Gastrocnemius medialis (tissue), 4 donors: ENCODE measurements at regions of chr10 and their contacts with region 1.

Region 1: DNA sequence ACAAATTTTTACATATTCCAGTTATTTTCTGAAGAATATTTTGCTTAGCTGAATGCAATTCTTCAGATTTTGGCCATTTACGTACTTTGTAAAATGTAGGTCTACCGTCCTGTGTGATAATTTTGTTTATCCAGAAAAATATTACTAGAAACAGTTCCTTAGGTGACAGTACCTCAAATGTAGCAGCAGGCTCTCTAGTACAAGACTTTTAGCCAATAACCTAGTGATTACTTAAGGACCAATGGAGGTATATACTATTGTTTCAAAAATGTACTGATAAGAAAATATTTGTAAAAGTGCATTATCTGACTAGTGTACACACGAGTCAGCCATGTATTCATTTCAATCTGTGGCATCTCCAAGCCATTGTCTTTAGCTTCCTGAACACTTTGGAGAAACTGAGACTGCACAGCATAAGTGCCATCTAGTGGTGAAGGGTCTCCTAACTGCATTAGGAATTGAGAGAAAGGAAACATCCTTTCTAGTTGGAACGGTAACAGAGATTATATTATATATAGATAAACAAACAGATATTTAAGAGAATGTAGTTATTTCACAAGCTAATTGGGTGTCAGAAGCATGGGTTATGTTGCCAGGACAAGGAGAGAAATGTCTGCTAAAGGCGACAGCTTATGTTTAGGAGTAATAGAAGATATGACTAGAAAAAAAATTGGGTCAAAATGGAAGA is 23.7 kb downstream of the RTKN2 start:
- DNase-seq: peak; percentile 29 to 41
- ATAC-seq: peak; percentile 82 to 83
- H3K4me3 ChIP-seq: no peak overlapping the region
- H3K27ac ChIP-seq: no peak overlapping the region
- H3K4me1 ChIP-seq: peaks cover 6 to 12% of the 10 kb centered on the region in 2 donors
- H3K27me3 ChIP-seq: no peaks in the 10 kb centered on the region
- CTCF ChIP-seq: peak; percentile 75 to 88 (median 83)
- POLR2A ChIP-seq: no peak

Region 2: GRCh38 chr10:62038609-62039190 is 206.2 kb before region 1 on chr10:
- in situ Hi-C with region 1: loop called in 3 of 4 experiments (anchors 5 kb)
- intact Hi-C with region 1: loop called (anchors 1 kb)
- DNase-seq: peak; percentile 48 to 65
- ATAC-seq: peak; percentile 73 to 85
- H3K4me3 ChIP-seq: peak overlapping the region in 3 of 4 donors; percentile 4 to 43 (median 27)
- H3K27ac ChIP-seq: peak overlapping the region in 2 of 4 donors; percentile 1 to 50
- H3K4me1 ChIP-seq: peaks cover 21 to 39% of the 10 kb centered on the region in 2 donors
- H3K27me3 ChIP-seq: no peaks in the 10 kb centered on the region
- CTCF ChIP-seq: peak; percentile 80 to 92 (median 89)
- POLR2A ChIP-seq: no peak

Region 3: DNA sequence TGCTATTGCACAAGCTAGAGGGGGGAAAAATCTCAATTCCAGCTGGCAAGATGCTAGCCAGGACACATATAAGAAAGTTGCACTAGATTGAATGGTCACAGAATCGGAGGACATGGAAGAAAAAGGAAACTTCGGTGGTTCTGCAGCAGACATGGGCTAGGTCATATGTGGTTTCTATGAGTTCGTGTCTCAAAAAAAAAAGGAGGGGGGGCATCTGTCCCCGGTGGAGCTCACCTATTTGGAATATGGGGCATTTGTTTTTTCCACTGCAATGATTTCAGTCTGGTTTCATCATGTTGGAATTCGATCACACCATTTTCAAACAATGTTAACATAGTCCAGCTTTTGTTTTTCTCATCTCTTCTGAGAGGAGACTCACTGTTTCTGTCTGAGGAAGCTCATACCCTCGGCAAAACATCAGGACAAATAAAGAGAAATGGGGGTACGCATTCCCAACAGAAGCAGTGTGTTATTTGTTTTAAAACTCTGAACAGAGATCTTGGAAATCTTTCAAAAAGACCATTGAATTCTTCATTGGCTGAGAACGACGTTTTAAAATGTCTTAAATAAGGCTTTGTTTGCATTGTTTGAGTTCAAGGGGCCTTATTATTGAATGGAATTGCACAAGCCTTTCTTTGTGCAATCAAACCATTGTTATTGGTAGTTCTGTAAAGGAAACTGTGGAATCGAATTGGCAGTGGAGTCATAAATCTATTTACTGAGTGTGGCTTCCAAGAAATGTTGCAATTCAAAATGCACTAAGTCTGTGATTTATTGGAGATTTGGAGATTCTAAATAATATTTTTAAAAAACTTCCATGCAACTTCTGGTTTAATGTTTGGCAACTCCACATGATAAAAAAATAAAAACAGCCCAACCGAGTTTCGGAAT is 149.5 kb before region 1 on chr10:
- in situ Hi-C with region 1: loop called in 1 of 4 experiments (anchors 25 kb)
- intact Hi-C with region 1: loop called (anchors 5 kb)
- DNase-seq: no peak
- ATAC-seq: no peak
- H3K4me3 ChIP-seq: no peak overlapping the region
- H3K27ac ChIP-seq: peak overlapping the region; percentile 55 to 91 (median 74)
- H3K4me1 ChIP-seq: peaks cover 34 to 63% of the 10 kb centered on the region in 2 donors
- H3K27me3 ChIP-seq: no peaks in the 10 kb centered on the region
- CTCF ChIP-seq: no peak
- POLR2A ChIP-seq: no peak

Region 4: DNA sequence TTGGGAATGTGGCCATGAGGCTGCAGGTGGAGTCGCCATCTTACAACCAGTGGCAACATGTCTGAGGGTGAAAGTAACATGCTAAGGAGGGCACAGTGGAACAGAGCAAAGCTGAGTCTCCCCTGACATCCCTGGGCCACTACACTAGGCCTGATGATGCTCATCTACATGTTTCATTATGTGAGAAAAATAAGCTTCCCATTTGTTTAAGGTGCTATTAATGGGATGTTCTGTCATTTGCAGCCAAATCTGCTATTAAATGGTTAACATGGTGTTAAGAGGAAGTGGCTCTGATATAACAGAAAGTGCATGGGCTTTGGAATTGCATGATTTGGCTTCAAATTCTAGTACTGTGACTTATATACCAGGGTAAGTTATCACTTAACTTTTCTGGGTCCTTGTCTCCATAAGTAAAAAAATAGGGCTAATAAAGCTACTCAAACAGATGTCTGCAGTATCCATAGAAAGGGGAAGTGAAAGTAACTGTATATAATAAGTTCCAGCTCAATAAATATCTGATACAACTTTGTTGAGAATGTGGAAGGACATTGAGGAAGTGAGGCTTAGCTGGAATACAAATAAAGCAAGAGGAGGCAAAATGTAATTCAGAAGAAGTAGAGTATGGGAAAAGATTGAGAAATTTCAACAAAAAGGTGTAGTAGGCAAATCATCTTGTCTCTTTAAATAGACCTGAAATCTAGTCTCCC is 135.2 kb before region 1 on chr10:
- in situ Hi-C with region 1: loop called in 1 of 4 experiments (anchors 25 kb)
- intact Hi-C with region 1: no loop called
- DNase-seq: no peak
- ATAC-seq: no peak
- H3K4me3 ChIP-seq: no peak overlapping the region
- H3K27ac ChIP-seq: no peak overlapping the region
- H3K4me1 ChIP-seq: no peaks in the 10 kb centered on the region
- H3K27me3 ChIP-seq: no peaks in the 10 kb centered on the region
- CTCF ChIP-seq: no peak
- POLR2A ChIP-seq: no peak